ENCODE measurements at regions of chr7 and their contacts with region 1.

Region 1: DNA sequence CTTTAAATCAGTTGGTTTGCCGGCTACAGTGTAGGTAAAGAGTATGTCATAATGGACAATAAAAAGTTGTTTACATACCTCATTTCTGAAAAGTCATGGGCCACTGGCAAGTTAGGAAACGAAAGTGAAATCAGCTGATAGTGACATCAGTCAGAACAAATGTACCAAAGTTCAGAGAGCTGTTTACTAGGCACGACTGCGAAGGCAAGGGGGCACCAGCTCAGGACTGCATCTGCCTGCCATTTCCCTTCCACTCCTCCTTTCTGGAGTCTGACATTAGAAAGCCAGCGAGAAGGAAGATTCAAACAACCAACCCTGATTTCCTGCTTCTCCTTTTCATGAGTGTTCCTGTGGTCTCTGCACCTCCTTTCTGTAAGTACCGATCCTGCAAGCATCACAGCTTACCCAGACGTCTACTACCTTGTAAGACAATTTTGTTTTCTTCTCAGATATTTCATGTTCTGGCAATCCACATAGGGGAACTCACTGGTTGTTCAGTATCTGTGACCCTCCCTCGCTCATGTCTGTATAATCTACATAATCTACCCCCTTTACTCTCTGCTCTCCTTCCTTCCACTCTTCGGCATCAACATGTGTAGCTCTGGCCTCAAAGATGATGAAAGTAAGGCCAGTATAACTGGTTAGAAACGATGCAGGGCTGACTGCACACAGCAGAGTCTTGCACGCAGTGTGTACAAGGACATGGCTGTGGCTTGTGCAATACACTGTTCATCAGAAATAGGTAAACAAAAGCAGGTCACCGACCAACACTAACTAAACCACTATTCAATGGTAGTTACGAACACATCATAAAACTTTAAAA is at the start of gene TMEM140:
- DNase-seq: peak; percentile 73 to 80
- ATAC-seq: peak; percentile 81 to 84
- H3K4me3 ChIP-seq: peak within 1 kb of the TSS; percentile 74 to 79 (median 78)
- H3K27ac ChIP-seq: peak within 1 kb of the TSS; percentile 96 to 99 (median 98)
- H3K4me1 ChIP-seq: peaks cover 45 to 47% of the 10 kb centered on the region in 2 donors
- H3K27me3 ChIP-seq: no peaks in the 10 kb centered on the region
- CTCF ChIP-seq: peak in 1 of 5 experiments; percentile 15
- POLR2A ChIP-seq: peak; percentile 93 to 97
- total RNA-seq, gene TMEM140: 116 to 179 (median 145) TPM

Region 2: DNA sequence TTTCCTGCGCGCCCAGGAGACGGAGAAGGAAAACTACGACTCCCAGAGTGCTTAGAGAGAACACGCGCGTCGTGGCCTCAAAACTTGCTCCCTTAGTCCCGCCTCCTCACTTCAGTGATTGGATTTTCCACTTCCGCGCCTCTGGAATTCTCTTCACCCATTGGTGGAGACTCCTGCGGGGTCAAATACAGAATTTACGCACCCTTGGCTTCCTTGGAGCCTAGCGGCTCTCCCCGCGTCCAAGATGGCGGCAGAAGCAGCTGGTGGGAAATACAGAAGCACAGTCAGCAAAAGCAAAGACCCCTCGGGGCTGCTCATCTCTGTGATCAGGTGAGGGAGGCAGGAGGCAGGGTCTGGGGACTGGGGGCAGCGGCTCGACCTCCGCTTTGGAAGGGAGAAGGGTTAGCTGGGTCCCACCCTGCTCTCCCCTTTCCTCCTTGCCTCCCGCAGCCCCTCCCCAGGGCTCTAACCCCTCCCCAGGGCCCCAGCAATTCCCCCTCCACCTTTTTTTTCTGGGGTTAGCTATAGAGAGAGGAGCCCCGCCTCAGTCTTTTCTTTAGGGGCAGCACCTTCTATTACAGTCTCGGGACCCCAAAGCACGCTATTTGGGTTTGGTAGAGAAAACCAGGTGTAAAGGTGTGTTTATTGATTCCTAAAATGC is 1895.1 kb before region 1 on chr7 and contains the start of gene EXOC4:
- in situ Hi-C with region 1: no loop called
- intact Hi-C with region 1: loop called (anchors 5 kb)
- DNase-seq: peak; percentile 93 to 95
- ATAC-seq: peak; percentile 100
- H3K4me3 ChIP-seq: peak within 1 kb of the TSS; percentile 84 to 99 (median 90)
- H3K27ac ChIP-seq: peak within 1 kb of the TSS; percentile 92 to 98 (median 93)
- H3K4me1 ChIP-seq: peaks cover 18 to 28% of the 10 kb centered on the region in 2 donors
- H3K27me3 ChIP-seq: no peaks in the 10 kb centered on the region
- CTCF ChIP-seq: no peak
- POLR2A ChIP-seq: peak; percentile 65
- total RNA-seq, gene EXOC4: 36.9 to 78.0 (median 52.2) TPM

Region 3: DNA sequence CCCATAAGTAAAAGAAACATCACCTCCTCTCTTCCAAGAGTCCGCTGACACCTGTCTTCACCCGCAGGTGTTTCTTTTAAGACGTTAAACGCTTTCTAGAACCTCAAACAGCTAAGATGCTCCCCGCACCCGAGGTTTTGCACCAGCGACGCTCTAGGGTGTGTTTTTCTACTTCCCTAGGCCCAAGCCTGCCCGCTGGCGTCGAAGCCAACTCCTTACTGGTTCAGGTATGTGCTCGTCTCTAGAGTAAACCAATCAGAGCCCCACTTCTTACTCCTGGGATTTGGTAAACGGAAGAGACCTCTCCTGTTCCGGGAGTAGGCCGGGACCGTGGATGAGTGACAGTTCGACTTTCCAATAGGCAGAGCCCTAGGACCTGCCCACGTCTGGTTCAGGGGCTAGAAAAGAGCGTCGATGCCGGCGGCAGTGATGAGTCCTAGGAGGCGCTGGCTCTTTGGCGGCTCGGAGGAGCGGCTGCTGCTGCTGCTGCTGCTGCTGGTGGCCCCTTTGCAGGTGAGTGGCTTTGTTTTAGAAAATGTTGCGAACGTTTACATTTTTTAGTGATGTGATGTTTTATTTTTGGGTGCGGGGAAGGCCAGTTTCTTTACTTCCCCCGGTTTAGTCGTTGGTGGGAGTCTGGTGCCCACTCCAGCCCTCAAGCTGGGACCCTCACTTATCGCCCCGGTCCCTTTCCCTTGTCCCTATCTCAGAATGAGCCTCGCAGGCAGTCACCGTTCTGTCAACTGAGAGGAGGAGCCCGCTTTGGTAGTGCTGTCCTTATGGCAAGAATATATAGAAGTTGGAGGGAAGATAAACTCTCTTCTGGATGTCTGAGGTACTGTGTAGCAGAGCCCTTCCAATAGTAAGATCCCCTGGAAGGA is 501.4 kb before region 1 on chr7 and contains the start of gene BPGM:
- in situ Hi-C with region 1: no loop called
- intact Hi-C with region 1: loop called (anchors 2 kb)
- DNase-seq: peak; percentile 98 to 99
- ATAC-seq: peak; percentile 100
- H3K4me3 ChIP-seq: peak within 1 kb of the TSS; percentile 61 to 85 (median 76)
- H3K27ac ChIP-seq: peak within 1 kb of the TSS; percentile 81 to 89 (median 85)
- H3K4me1 ChIP-seq: peaks cover 17 to 20% of the 10 kb centered on the region in 2 donors
- H3K27me3 ChIP-seq: no peaks in the 10 kb centered on the region
- CTCF ChIP-seq: peak in 1 of 5 experiments; percentile 10
- POLR2A ChIP-seq: peak; percentile 89 to 98
- total RNA-seq, gene BPGM: 11.3 to 24.5 (median 13.6) TPM

Region 4: DNA sequence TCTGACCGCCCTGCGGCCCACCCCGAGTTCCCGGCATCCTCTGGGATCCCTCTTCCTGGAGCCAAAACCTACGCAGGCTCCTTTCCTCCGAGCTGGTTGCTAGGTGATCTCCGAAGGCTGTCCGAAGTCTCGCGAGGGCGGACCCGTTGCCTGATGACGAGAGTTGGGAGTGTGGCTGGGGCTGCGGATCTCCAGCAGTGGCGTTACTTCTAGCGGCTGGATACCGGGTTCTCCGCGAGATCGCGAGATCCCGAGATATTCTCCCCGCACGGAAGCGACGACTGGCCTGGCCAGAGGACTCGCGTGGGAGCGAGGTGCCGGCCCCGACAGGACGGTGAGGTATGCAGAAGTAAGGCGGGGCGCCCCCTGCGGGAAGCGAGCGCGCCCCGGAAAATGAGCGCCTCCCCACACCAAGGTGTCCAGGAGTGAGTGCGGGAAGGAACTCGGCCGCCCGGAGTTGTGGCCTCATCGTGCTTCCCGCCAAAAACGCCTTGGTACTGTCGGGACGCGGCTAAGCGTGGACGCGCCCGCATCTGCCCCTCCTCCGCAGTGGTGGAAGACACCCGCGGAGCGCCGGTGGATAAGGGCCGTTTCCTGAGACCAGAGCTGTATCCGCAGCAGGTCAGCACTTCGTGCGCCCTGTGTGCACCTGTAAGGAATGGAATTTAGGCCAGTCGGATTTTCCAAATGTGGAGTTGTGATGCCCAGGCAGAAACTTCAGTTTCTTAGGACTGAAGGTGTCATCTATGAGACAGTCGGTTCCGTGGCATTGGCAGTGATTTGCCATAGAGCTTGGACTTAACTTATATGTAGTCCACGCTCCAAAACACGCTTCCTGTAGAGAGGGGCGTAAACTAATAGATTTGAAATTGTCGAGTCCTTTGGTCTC is 161.5 kb before region 1 on chr7 and contains the start of gene AGBL3:
- in situ Hi-C with region 1: no loop called
- intact Hi-C with region 1: loop called (anchors 5 kb)
- DNase-seq: peak; percentile 83 to 93
- ATAC-seq: peak; percentile 96 to 99
- H3K4me3 ChIP-seq: peak within 1 kb of the TSS; percentile 75 to 92 (median 78)
- H3K27ac ChIP-seq: peak within 1 kb of the TSS; percentile 87 to 91 (median 87)
- H3K4me1 ChIP-seq: peaks cover 11 to 17% of the 10 kb centered on the region in 2 donors
- H3K27me3 ChIP-seq: no peaks in the 10 kb centered on the region
- CTCF ChIP-seq: peak; percentile 51 to 73 (median 66)
- POLR2A ChIP-seq: peak in 1 of 2 donors; percentile 60
- total RNA-seq, gene AGBL3: 0.61 to 1.9 (median 1.0) TPM

Region 5: DNA sequence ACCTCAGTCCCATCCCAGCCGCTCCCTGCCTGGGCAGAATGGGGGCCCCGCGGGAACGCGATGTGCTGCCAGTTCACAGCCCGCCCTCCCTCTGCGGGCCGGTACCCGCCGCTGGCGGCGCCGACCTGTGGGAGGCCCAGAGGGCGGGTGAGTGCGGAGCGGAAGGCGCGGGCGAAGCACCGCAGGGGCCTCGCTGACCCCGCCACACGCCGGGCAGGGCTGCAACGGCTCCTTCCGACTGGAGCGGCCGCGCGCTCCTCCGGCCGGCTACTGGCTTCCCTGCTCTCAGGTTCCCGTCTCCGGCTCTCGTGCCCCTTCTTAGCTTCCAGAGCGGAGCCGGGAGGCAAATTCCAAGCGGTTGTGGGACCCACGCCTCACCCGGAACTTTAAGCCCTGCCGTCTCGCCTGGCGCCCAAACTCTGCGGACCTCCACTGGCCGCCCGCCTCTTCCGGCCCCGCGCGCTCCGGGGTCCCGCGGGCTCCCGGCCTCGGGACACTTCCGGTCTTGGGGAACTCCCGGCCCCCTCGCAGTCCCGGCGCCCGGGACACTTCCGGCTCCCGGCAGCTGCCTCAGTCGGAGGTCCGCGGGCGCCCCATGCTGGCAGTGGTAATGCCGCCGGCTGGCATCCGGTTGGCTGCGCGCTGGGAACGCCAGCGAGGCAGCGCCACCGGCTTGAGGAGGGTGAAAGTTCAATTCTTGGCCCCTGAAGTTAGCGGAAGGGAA is 22.3 kb after region 1 on chr7 and contains the start of gene CYREN:
- in situ Hi-C with region 1: no loop called
- intact Hi-C with region 1: loop called (anchors 1 kb)
- DNase-seq: peak; percentile 90 to 95
- ATAC-seq: peak; percentile 63 to 74
- H3K4me3 ChIP-seq: peak within 1 kb of the TSS; percentile 63 to 85 (median 72)
- H3K27ac ChIP-seq: peak within 1 kb of the TSS; percentile 93 to 97 (median 96)
- H3K4me1 ChIP-seq: peaks cover 53 to 59% of the 10 kb centered on the region in 2 donors
- H3K27me3 ChIP-seq: no peaks in the 10 kb centered on the region
- CTCF ChIP-seq: peak; percentile 54 to 77 (median 66)
- POLR2A ChIP-seq: peak; percentile 81 to 89
- total RNA-seq, gene CYREN: 11.8 to 51.5 (median 20.4) TPM

Region 6: GRCh38 chr7:135211179-135211945 is 63.3 kb after region 1 on chr7 and contains the start of gene WDR91:
- in situ Hi-C with region 1: no loop called
- intact Hi-C with region 1: loop called (anchors 5 kb)
- DNase-seq: peak; percentile 91 to 95
- ATAC-seq: peak; percentile 88 to 91
- H3K4me3 ChIP-seq: peak within 1 kb of the TSS; percentile 68 to 84 (median 80)
- H3K27ac ChIP-seq: peak within 1 kb of the TSS; percentile 86 to 95 (median 90)
- H3K4me1 ChIP-seq: peaks cover 11 to 22% of the 10 kb centered on the region in 2 donors
- H3K27me3 ChIP-seq: no peaks in the 10 kb centered on the region
- CTCF ChIP-seq: no peak
- POLR2A ChIP-seq: peak; percentile 70 to 81
- total RNA-seq, gene WDR91: 3.6 to 8.0 (median 6.4) TPM

Region 7: DNA sequence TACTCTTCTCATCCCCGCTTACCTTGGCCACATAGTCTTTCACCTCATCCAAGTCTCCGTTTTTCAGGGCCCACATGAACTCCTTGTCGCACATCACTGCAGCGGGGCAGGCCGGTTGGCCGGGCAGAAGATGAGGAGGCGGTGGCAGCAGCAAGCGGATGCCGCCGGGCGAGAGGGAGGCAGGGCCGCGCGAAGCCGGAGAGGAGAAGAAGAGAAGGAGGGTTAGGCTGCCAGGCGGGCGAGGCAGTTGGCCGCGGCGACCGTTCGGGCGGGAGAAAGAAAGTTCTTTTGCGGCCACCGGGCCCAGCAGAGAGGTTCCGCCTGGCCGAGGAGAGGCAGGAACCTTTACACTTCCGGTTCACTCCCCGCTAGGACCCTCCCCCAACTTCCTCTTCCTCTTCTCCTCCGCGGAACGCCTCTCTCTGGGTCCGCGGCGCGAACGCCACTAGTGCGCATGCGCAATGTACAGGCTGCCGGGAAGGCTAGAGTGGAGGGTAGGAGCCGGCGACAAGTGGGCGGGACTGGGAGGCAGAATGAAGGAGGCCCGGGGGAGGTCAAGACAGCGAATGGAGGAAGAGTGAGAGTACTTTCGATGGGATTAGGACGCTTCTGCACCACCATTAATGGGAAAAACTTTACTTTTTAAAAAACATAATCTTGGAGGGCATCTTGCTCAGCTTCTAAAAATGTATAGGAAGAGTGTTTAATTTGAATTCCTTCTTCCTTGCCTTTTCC is 829.1 kb after region 1 on chr7 and contains the start of gene MTPN:
- in situ Hi-C with region 1: no loop called
- intact Hi-C with region 1: loop called (anchors 10 kb)
- DNase-seq: peak; percentile 97 to 98
- ATAC-seq: peak; percentile 99
- H3K4me3 ChIP-seq: peak within 1 kb of the TSS; percentile 85 to 99 (median 92)
- H3K27ac ChIP-seq: peak within 1 kb of the TSS; percentile 89 to 96 (median 92)
- H3K4me1 ChIP-seq: peaks cover 30 to 43% of the 10 kb centered on the region in 2 donors
- H3K27me3 ChIP-seq: no peaks in the 10 kb centered on the region
- CTCF ChIP-seq: no peak
- POLR2A ChIP-seq: peak; percentile 76 to 77
- total RNA-seq, gene MTPN: 48.5 to 94.2 (median 58.7) TPM